ENCODE measurements at regions of chr2 and their contacts with region 1.

Region 1: DNA sequence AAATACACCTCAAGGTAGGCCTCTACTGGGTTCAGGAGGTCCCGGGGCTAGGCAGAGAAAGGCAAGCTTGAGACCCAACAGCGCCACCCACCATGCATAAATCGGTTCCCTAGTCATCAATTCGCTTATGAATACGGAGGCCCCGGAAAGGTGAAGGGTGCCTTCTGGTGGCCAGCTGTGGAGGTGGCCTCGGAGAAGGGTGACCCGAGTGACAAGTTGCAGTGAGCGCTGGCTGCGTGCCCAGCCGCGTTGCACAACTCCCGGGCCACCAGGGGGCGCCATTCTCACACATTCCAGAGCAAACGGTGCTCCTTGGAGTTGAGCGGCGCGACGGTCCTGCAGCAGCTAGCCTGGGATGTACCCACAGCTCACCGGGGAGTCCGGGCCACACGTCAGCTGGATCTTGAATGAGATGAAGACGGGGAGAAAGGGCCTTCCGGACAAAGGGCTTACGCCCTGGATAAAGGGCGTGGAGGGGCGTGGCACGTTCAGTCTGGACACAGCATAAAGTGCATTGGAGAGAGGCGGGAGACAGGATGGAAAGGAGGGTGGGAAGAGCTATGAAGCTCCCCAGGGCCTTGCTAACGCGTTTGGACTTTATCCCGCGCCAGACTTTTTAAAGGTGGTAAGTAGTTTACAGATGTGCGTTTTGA is 20.4 kb downstream of the TMSB10 start:
- DNase-seq: peak; percentile 99
- H3K4me3 Mint-ChIP-seq: peak overlapping the region; percentile 86
- H3K27ac Mint-ChIP-seq: peak overlapping the region; percentile 90
- H3K4me1 Mint-ChIP-seq: peaks cover 64% of the 10 kb centered on the region
- H3K27me3 Mint-ChIP-seq: no peaks in the 10 kb centered on the region

Region 2: DNA sequence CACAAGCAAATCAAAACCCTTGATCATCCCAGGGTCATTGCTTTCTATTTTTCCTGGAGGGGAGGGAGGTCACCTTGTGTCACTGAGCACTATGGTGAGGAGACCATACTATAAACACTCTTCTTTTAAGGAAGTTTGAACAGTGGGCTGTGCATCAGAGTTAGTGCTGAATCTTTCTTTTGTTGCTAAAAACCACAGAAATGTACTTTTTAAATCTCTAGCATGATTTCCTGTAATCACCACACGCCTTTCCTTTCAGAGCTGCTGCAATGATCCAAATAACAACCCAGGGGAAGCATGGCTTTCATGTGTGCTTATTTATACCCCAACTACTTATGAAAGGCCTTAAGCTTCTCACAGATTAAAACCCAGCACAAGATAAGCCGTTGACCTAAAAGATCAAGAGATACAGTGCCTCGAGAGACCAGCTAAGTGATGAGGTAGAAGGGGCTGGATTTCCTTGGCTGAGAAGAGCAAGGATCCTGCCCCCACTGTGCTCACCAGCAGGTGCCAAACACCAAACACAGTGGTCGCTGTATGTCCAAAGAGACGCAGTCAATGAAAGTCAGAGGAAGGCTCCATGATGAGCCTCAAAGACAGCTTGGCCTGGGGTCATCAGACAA is 79.7 kb before region 1 on chr2:
- CTCF ChIA-PET with region 1: interaction called, 22 read pairs
- DNase-seq: peak; percentile 64
- H3K4me3 Mint-ChIP-seq: peak overlapping the region; percentile 25
- H3K27ac Mint-ChIP-seq: peak overlapping the region; percentile 97
- H3K4me1 Mint-ChIP-seq: peaks cover 95% of the 10 kb centered on the region
- H3K27me3 Mint-ChIP-seq: no peaks in the 10 kb centered on the region

Region 3: DNA sequence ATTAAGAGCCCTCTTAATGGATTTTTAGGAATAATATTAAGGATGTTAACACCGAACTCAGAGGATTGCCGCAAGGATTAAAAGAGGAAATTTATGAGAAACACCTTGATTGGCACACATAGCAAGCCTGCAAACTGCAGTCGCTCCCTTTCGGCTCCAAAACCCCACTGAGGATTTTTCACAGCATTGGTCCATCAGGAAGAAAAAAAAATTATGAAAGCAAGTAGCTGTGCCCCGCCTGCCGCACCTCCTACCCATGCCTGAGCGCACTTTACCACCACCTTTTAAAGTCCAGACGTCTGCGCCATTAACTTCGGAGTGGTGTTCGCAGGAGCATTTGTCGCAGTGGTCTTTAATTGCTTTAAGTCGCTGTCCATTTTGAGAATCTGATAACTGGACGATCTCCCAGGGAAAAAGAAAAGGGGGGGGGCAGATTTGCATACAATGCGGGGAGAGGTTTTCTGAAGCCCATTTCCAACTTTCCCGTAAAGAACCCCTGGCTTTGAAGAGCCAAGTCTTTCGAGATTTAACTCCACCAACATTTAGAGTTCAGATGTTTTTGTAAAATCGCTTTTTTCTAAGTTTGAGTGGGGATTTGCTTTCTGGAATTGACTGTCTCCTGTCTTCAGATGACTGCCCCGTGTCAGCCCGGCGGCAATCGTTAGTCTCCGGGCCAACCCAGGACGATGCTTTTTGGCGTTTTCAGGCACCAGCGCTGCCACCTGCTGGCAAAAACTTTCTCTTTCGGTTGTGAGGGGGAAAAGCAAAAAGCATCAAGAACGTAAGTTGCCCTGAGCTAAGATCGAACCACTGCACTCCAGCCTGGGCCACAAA is 44.1 kb before region 1 on chr2:
- CTCF ChIA-PET with region 1: interaction called, 134 read pairs
- DNase-seq: peak; percentile 93
- H3K4me3 Mint-ChIP-seq: peak overlapping the region; percentile 89
- H3K27ac Mint-ChIP-seq: peak overlapping the region; percentile 96
- H3K4me1 Mint-ChIP-seq: peaks cover 58% of the 10 kb centered on the region
- H3K27me3 Mint-ChIP-seq: no peaks in the 10 kb centered on the region

Region 4: GRCh38 chr2:84939426-84940087 is 13.7 kb after region 1 on chr2:
- CTCF ChIA-PET with region 1: interaction called, 105 read pairs
- DNase-seq: peak; percentile 90
- H3K4me3 Mint-ChIP-seq: peak overlapping the region; percentile 62
- H3K27ac Mint-ChIP-seq: peak overlapping the region; percentile 98
- H3K4me1 Mint-ChIP-seq: peaks cover 70% of the 10 kb centered on the region
- H3K27me3 Mint-ChIP-seq: no peaks in the 10 kb centered on the region

Region 5: DNA sequence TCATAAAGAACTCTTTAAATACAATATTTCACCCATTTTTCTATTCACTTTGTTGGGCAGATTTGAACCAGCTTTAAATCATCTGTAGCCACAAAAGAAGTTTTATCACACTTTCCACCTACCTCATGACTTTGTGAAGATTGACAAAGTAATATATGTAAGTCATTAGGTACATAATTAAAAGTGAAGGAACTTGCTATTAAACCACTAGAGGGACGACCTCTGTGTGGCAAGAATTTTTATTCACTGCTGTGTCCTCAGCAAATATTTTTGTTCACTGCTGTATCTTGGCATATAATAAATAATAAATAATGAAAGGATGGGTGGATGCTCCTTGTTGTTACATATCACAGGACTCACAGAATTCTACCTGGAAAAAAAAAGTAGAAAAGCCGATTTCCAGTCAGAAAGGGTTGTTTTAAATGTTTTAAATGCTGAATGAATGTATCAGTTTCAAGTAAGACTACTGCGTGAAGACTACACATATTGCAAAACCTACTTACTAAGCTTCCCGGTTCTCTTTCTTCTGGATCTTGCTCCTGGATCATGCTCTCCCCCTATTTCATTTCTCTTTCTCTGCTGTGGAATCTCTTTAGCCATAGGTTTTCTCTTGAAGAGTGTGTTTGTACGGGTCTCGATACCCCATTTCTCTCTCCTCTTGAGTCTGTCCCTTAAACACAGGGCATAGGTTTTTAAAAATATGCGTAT is 90.0 kb after region 1 on chr2:
- CTCF ChIA-PET with region 1: interaction called, 71 read pairs
- DNase-seq: no peak
- H3K4me3 Mint-ChIP-seq: no peak overlapping the region
- H3K27ac Mint-ChIP-seq: peak overlapping the region; percentile 24
- H3K4me1 Mint-ChIP-seq: peaks cover 59% of the 10 kb centered on the region
- H3K27me3 Mint-ChIP-seq: no peaks in the 10 kb centered on the region

Region 6: DNA sequence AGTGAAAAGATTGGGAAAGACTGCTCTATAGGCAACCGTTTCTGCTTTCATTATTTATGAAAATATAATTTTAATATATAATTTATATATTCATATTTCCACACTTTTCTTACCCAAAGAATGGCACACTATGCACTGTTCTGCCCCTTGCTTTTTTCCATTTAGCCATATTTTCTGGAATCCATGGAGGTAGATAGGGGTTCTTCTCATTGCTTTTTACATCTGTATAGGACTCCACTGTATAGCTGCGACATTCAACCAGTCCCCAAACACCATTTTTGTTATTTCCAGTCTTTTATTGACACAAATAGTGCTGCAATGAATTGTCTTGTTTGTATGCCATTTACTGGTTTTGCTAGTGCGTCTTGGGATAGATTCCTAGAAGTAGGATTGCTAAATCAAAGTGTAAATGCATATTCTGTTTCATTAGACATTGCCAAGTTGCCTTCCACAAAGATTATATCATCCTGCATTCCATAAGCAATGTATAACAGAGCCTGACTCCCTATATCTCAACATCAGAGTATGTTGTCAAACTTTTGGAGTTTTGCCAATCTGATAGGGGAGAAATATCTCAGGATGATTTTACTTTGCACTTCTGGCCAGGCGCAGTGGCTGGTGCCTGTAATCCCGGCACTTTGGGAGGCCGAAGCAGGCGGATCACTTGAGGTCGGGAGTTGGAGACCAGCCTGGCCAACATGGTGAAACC is 180.8 kb after region 1 on chr2:
- CTCF ChIA-PET with region 1: no interaction called
- DNase-seq: no peak
- H3K4me3 Mint-ChIP-seq: no peak overlapping the region
- H3K27ac Mint-ChIP-seq: no peak overlapping the region
- H3K4me1 Mint-ChIP-seq: no peaks in the 10 kb centered on the region
- H3K27me3 Mint-ChIP-seq: peaks cover 3% of the 10 kb centered on the region

Region 7: DNA sequence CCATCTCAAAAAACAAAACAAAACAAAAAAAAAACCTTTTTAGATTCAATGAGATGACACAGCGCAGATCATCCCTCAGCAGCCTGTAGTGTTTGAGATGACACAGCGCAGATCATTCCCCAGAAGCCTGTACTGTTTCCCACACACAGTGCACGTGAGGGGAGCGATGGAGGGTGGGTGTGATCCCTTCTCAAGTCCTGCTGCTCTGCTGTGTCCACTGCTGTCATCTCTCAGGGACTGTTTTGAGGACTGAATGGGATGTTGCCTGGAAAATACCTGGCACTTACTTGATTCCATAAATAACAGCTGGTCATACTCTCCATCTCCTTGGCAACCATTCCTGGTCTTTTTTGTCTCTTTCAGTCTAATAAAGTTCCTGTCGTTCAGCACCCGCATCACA is 376.3 kb after region 1 on chr2:
- CTCF ChIA-PET with region 1: interaction called, 28 read pairs
- DNase-seq: no peak
- H3K4me3 Mint-ChIP-seq: no peak overlapping the region
- H3K27ac Mint-ChIP-seq: no peak overlapping the region
- H3K4me1 Mint-ChIP-seq: peaks cover 5% of the 10 kb centered on the region
- H3K27me3 Mint-ChIP-seq: peaks cover 57% of the 10 kb centered on the region

Measured in activated naive CD4-positive, alpha-beta T cell treated with anti-CD3 and anti-CD28 coated beads, Interleukin-2, amount 10 ng/mL, durations not matched to agents 7 days and 5 days (primary cell).